BJ (cell line): ENCODE measurements at regions of chr4 and their contacts with region 1.

Region 1: GRCh38 chr4:102868781-102869568 is at the start of gene CISD2:
- DNase-seq: peak; percentile 48
- H3K4me3 ChIP-seq: peak within 1 kb of the TSS; percentile 69
- H3K27me3 ChIP-seq: no peaks in the 10 kb centered on the region
- CTCF ChIP-seq: no peak
- polyA plus RNA-seq, gene CISD2: 23.0 and 32.2 TPM in 2 replicates

Region 2: DNA sequence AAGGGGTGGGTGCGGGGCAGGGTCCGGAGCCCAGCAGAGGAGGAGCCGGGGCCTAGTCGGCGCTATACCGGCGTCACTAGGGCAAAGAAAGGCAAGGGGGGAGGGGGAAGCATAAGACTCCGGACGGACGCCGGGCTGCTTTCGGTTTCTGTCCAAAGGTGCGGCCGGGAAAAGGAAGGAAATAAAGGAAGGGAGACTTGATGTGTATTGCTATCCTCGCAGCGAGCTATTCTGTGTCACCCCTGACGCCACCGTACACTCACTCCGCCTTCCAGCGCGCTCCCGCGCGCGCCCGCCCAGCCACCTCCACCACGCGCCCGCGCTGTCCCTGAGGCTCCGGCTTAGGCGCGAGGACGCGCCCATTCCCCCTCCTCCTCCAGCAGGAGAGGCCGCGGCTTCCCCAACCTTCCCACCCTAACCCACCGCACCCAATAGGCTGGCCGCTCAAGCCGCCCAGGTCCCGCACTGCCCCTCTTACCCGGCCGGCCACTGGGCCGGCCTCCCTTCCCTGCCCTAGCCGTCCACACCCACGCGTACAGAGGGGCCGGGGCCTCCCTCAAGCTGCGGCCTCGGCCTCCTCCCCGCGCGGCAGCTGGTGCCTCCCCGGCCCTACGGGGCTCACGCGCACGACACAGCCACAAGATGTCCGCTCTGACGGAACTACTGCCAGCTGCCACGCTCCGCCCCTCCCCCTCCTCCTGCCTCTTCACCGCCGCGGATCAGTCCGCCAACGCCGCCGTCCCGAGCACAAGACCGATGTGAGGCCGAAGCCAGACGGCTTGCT is 41.9 kb before region 1 on chr4 and contains the start of gene UBE2D3:
- CTCF ChIA-PET with region 1: interaction called, 8 read pairs
- POLR2A ChIA-PET with region 1: interaction called, 10 read pairs
- DNase-seq: peak; percentile 57
- H3K4me3 ChIP-seq: peak within 1 kb of the TSS; percentile 70
- H3K27me3 ChIP-seq: no peaks in the 10 kb centered on the region
- CTCF ChIP-seq: peak; percentile 19; the same call in 1 of the 2 replicates
- polyA plus RNA-seq, gene UBE2D3: 298 and 431 TPM in 2 replicates

Region 3: GRCh38 chr4:103137446-103137827 is 268.5 kb after region 1 on chr4:
- CTCF ChIA-PET with region 1: no interaction called
- POLR2A ChIA-PET with region 1: no interaction called
- DNase-seq: no peak
- H3K4me3 ChIP-seq: no peak overlapping the region
- H3K27me3 ChIP-seq: no peaks in the 10 kb centered on the region
- CTCF ChIP-seq: 0 out of 2 replicates have a peak, but pooled peaks have one; percentile 2